Cardiac septum (tissue), 1 donor: ENCODE measurements at regions of chr1 and their contacts with region 1.

Region 1: GRCh38 chr1:116915182-116915661 is 5.5 kb downstream of the PTGFRN start:
- DNase-seq: no peak

Region 2: DNA sequence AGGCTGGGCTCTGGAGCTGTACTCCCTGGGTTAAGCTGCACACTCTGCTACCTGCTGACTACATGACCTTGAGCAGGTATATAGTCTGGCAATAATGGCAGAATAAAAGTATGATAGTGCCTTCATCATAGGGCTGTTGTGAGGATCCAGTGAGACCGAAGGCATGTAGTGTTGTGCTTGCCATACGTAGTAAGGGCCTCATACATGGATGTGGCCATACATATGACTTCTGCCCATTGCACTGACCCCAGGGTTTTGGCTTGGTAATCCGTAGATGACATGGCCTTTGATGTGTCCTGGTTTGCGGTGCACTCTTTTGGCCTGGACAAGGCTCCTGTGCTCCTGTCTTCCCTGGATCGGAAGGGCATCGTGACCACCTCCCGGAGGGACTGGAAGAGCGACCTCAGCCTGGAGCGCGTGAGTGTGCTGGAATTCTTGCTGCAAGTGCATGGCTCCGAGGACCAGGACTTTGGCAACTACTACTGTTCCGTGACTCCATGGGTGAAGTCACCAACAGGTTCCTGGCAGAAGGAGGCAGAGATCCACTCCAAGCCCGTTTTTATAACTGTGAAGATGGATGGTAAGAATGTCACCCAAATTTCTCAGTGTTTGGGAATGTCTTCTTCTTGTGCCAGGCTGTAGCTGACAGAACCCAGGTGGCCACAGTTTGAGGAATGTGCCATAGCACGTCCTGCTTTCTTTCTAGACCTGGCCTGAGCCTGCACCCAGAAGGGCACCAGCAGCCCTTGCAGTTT is 69.4 kb after region 1 on chr1:
- intact Hi-C with region 1: loop called (anchors 2 kb)
- DNase-seq: no peak